ENCODE measurements at regions of chr15 and their contacts with region 1.

Region 1: DNA sequence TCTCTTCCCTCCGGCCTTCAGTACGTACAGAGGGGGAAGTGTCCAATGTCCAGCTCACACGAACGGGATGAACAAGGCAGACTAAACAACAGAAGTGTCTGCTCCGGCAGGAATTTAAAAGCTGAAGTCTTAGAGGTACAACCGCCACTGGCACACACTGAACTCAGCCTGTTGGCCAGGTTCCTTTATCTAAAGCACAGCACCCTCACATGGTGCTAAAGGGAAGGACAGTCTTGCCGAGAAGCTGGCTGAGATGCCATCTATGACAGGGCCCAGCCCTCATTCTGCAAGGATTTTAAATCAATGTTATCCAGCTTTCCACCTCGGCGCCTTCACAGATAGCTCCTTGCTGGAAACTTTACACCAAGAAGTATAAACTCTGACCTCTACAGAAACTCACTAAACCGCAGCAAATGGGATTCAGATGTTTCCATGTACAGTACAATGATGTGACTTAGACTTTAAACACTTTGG is 2.8 kb downstream of the ADAMTS17 start:
- DNase-seq: peak in 3 of 4 donors; percentile 51 to 81 (median 60)
- ATAC-seq: peak; percentile 62
- H3K4me3 ChIP-seq: no peak overlapping the region
- H3K27ac ChIP-seq: no peak overlapping the region
- H3K4me1 ChIP-seq: peaks cover 0 to 18% of the 10 kb centered on the region in 2 donors
- H3K27me3 ChIP-seq: peaks cover 4 to 82% of the 10 kb centered on the region in 2 donors
- CTCF ChIP-seq: peak; percentile 50 to 62

Region 2: GRCh38 chr15:99931703-99932603 is 407.1 kb before region 1 on chr15:
- intact Hi-C with region 1: loop called in 1 of 2 experiments (anchors 10 kb)
- DNase-seq: no peak
- ATAC-seq: no peak
- H3K4me3 ChIP-seq: no peak overlapping the region
- H3K27ac ChIP-seq: no peak overlapping the region
- H3K4me1 ChIP-seq: peaks cover 3 to 5% of the 10 kb centered on the region in 2 donors
- H3K27me3 ChIP-seq: peaks cover 0 to 10% of the 10 kb centered on the region in 2 donors
- CTCF ChIP-seq: no peak

Region 3: DNA sequence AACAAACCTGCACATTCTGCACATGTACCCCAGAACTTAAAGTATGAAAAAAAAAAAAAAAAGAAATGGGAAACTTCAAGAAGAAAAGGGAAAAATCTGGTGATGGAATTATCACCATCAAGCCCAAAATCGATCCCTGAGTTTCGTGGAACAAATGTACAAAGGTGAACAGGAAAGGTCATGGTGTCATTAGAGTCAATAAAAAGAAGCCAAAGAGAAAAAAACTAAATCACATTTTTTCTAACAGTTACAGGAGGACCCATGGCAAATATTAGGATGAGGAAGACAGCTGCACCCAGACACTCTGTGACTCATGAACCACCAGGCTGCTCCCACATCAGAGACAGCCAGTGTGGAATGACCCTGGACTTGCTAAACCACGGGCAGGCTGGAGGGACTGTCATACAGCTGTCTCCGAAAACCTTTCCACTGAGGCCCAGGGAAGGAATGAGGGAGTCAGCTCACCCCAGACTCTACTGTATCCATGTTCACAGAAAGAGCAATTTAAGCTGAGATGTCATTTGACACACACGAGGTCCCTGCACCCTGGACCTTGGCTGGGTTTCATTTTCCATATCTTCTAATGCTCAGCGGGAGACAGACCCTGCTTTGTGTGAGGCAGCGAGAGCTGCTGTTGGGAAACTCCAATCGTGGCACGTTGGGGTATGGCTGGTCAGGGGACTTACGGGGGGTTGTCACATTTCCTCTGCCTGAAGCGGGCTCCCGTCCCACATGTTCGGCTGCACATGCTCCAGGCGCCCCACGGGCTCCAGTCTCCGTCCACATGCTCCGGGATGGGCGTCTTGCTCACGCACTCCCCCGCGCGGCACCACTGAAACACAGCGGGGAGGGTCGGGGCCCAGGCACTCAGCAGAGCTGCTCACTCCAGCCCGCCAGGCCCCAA is 207.4 kb before region 1 on chr15:
- intact Hi-C with region 1: no loop called
- DNase-seq: peak in 2 of 4 donors; percentile 63 to 87
- ATAC-seq: peak; percentile 91
- H3K4me3 ChIP-seq: peak overlapping the region in 1 of 2 donors; percentile 3
- H3K27ac ChIP-seq: no peak overlapping the region
- H3K4me1 ChIP-seq: no peaks in the 10 kb centered on the region
- H3K27me3 ChIP-seq: no peaks in the 10 kb centered on the region
- CTCF ChIP-seq: peak; percentile 20 to 51

Measured in left lung (tissue), 14 donors.